KBM-7 (cell line): ENCODE measurements at regions of chr5 and their contacts with region 1.

Region 1: DNA sequence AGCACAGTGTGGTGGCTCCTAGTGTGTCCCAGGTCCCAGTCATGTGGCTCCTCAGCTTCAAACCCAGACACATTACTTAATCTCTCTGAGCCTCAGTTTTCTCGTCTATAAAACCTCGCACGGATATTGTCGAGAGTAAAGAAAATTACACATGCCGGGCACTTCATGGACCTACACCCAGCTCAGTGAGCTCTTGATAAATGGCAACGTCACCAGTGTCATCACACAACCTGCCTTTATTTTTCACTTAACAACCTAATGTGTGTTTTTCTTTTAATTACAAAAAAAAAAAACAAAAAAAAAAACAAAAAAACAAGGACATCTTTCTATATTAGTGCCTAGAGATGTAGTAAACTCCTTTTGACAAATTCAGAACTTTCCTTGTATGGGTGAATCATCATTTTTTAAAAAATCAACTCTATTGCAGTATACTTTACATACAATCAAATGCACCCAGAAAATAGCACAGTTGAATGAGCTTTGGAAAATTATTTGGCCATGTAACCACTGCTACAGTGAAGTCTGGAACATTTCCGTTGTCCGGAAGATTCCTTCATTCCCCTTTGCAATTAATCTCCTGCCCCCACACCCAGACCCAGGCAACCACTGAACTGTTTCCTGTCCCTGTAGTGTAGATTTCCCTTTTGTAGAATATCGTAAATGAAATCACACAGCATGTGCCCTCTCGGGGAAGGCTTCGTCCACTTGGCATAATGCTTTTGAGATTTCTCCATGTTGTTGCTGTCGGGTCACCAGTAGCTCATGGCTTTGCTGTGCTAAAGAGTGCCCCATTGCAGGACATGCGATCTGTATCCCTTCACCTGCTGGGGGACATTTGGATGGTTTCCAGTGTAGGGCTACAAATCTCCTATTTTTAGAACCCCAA is 100.4 kb upstream of the LARP1 start:
- DNase-seq: peak; percentile 78

Region 2: DNA sequence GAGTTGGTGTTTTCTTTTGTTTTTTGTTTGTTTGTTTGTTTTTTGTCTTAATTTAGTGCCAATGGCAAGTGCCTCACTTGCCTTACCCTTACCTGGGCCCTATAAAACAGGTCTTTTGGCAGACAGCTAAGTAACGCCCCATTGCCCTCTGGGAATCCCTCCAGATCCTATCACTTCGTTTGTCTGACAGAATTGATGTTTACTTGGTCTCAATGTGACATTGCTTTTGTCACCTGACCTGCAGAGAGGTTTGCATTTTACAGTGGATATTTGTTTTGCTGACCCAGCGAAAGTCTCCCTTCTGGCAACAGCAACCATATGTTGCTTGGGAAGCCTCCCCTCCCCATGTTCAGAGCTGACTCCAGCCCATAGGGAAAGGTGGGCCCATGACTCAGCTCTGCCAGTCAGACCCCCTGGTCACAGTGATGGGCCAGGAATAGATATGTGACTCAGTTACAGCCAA is 46.4 kb after region 1 on chr5:
- in situ Hi-C with region 1: no loop called
- DNase-seq: no peak

Region 3: GRCh38 chr5:154811653-154812365 is 157.1 kb after region 1 on chr5:
- in situ Hi-C with region 1: loop called (anchors 25 kb)
- DNase-seq: peak; percentile 66

Region 4: DNA sequence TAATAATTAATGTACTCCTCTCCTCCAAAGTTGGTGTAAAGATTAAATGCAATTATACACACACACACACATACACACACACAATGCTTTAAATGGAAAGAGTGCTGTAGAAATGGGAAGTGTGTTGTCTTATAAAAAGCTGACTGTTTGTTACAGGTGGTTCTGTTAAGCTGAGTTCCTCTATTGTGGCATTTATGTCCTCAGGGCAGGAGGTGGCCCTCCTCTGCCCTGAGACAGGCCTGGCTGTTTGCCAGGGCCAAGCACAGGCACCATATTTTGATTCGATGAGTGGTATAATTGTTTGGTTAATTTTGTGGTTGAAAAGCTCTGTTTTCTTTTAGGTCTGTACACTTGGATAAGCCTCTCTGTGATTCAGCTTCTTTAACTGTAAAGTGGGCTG is 932.7 kb after region 1 on chr5:
- in situ Hi-C with region 1: no loop called
- DNase-seq: peak; percentile 37